AG04450 (cell line): ENCODE measurements at regions of chr1 and their contacts with region 1.

Region 1: DNA sequence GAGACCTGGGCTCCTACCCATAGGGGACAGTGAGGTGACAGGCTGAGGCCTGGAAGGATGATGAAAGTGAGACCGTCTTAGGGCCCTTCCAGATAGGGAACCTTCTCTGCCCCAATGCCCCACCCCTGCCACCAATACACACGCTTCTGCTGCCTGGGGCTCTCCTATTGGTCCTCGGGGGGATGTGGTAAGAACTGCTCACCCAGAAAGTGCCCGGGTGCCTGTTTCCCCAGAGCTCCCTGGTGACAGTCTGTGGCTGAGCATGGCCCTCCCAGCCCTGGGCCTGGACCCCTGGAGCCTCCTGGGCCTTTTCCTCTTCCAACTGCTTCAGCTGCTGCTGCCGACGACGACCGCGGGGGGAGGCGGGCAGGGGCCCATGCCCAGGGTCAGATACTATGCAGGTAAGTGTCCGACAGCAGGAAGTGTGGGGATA is 948 bp downstream of the SEMA4A start:
- DNase-seq: no peak
- H3K4me3 ChIP-seq: no peak overlapping the region
- H3K27ac ChIP-seq: no peak overlapping the region
- H3K27me3 ChIP-seq: peaks cover 9% of the 10 kb centered on the region
- CTCF ChIP-seq: no peak

Region 2: GRCh38 chr1:156198831-156199349 is 44.6 kb after region 1 on chr1:
- CTCF ChIA-PET with region 1: interaction called, 4 read pairs
- POLR2A ChIA-PET with region 1: interaction called, 13 read pairs
- DNase-seq: no peak
- H3K4me3 ChIP-seq: no peak overlapping the region
- H3K27ac ChIP-seq: no peak overlapping the region
- H3K27me3 ChIP-seq: no peaks in the 10 kb centered on the region
- CTCF ChIP-seq: no peak